Breast epithelium (tissue), 4 donors: ENCODE measurements at regions of chr14 and their contacts with region 1.

Region 1: GRCh38 chr14:92846162-92846897 is 52.2 kb downstream of the GOLGA5 start:
- DNase-seq: no peak
- H3K4me3 ChIP-seq: no peak overlapping the region
- H3K27ac ChIP-seq: no peak overlapping the region
- H3K4me1 ChIP-seq: no peaks in the 10 kb centered on the region
- H3K27me3 ChIP-seq: no peaks in the 10 kb centered on the region
- CTCF ChIP-seq: no peak
- POLR2A ChIP-seq: no peak

Region 2: DNA sequence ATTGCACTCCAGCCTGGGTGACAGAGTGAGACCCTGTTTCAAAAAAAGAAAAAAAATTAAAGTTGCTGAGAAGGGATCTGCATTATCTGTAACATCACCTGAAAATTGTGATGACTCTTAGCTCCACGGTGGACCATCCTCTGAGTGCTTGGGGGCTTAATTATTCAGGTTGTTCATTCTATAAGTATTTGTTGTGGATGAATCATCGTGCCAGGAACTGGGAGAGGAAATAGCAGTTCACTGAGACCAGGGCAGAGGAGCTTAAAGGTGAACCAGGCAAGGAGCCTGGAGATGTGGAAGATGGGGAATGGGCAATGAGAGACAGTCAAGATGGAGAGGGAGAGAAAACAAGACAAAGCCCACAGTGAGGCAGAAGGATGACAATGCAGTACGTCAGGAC is 1949.0 kb after region 1 on chr14:
- intact Hi-C with region 1: loop called (anchors 10 kb)
- DNase-seq: no peak
- H3K4me3 ChIP-seq: no peak overlapping the region
- H3K27ac ChIP-seq: no peak overlapping the region
- H3K4me1 ChIP-seq: no peaks in the 10 kb centered on the region
- H3K27me3 ChIP-seq: no peaks in the 10 kb centered on the region
- CTCF ChIP-seq: no peak
- POLR2A ChIP-seq: no peak